Dendritic cell treated with granulocyte-macrophage colony-stimulating factor and Interleukin-4, amounts not matched to agents 40 ng/mL and 50 ng/mL, for 4 days (primary cell): ENCODE measurements at regions of chr13 and their contacts with region 1.

Region 1: DNA sequence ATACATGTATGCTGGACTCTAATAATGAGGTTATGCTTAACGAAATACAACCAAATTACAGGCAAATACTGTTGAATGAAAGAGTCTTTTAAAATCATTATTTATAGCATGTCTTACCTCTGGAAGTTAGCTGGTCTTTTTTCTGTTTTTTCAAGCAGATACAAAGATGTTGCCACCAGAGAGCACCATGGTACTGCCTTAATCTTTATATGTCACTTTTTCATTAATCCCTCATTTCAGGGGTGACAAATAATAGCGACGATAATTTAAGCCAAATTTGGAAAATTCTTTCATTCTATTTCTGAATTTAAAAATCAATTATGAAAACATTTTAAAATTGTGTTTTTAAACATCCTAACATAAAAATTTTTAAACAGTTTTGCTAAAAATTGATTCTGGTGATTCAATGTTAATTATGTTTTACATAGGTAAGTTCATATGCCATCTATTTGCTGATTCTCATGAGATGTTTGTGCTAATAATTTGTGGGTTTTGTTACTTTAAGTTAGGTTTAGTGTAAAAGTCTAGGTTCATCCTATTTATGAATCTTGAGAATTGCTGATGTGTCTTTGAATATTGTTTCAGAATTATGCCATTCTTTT is 379.3 kb upstream of the SGCG start:
- H3K4me3 Mint-ChIP-seq: no peak overlapping the region
- H3K27ac Mint-ChIP-seq: peak overlapping the region; percentile 36
- H3K4me1 Mint-ChIP-seq: peaks cover 27% of the 10 kb centered on the region
- H3K27me3 Mint-ChIP-seq: peaks cover 23% of the 10 kb centered on the region

Region 2: GRCh38 chr13:22114630-22115311 is 686.7 kb before region 1 on chr13:
- intact Hi-C with region 1: loop called (anchors 10 kb)
- H3K4me3 Mint-ChIP-seq: peak overlapping the region; percentile 34
- H3K27ac Mint-ChIP-seq: peak overlapping the region; percentile 96
- H3K4me1 Mint-ChIP-seq: peaks cover 33% of the 10 kb centered on the region
- H3K27me3 Mint-ChIP-seq: peaks cover 52% of the 10 kb centered on the region

Region 3: DNA sequence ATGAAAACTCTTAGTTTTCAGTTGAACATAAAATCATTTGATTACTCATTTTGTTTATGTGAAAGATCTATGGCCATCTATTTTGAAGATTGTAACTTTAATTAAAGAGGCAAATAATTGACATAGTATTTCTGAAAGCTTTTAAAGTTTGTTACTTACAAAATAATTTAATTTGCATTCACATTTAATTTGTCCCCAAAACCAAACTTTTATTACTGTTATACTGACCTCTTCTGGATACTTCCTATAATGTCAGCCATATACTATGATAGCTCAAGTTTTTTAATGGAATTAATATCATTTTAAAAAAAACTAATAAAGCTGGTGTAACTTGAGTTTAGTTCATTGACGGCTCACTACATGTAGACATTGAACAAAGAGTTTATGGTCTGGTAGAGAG is 374.4 kb after region 1 on chr13:
- intact Hi-C with region 1: loop called (anchors 10 kb)
- H3K4me3 Mint-ChIP-seq: no peak overlapping the region
- H3K27ac Mint-ChIP-seq: no peak overlapping the region
- H3K4me1 Mint-ChIP-seq: no peaks in the 10 kb centered on the region
- H3K27me3 Mint-ChIP-seq: peaks cover 3% of the 10 kb centered on the region